Activated CD4-positive, alpha-beta memory T cell treated with anti-CD3 and anti-CD28 coated beads, Interleukin-2, amount 10 ng/mL, durations not matched to agents 7 days and 5 days (primary cell): ENCODE measurements at regions of chr13 and their contacts with region 1.

Region 1: DNA sequence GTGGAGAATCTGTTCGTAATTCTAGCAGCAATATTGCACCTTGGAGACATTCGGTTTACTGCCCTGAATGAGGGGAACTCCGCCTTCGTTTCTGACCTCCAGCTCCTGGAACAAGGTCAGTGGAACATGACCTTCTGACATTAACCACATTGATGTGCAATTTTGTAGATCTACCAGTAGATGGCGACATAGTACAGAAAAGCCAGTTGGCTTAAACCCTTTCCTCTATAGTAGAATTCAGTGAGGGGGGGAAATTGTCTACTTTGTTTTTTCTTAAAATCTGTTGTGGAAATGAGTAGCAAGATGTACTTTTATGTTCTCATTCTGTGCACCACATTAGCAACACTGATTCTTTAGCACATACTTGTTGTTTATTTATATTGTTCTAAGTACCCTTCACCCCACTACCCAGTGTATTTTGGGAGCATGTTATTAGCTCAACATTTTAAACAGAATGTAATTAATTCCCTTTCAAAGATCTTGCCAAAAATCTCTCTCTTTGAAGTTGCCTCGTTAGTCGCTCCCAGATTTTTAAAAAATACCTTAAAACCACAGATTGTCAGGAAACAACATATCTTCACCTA is 332.2 kb downstream of the MYO16 start:
- DNase-seq: peak; percentile 19
- H3K4me3 Mint-ChIP-seq: no peak overlapping the region
- H3K27ac Mint-ChIP-seq: no peak overlapping the region
- H3K4me1 Mint-ChIP-seq: peaks cover 2% of the 10 kb centered on the region
- H3K27me3 Mint-ChIP-seq: no peaks in the 10 kb centered on the region

Region 2: DNA sequence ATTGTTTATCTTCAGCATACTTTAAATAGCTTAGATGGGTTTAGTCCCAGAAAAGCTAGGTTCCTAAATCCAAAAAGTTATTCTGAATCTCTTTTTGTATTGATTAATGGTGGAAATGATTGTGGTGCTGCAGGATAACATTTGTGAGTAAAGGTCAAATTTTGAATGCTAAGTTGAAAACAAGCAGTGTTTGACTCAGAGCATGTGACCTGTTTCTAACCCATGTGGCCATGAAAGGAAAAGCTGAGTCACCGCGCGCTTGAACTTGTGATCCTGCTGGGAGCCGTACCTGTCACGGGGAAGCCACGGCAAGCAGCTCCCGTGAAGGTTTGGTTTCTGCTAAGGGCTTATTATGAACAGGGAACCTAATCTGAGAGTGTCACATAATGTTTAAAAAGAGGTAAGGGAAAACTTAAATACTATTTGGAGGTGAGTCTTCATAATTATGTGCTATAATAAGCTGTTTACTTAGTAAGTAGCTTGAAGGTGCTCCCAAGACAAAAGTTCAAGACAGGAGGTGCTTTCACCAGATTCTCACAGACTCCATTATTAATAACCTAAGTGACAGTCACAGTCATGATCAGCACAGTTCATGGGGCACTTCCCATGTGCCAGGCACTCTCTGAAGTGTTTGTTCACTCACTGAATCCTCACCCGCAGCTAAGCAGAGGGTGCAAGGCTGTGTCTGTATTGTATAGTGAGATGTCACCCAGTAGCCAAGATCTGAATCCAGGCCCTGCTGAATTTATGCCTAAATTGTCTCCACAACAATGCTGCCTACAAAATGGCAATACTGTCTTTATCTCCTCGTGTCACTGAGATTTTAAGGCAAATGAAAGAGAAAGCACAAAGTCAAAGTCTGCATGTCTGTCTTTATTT is 45.8 kb before region 1 on chr13:
- CTCF ChIA-PET with region 1: interaction called, 11 read pairs
- POLR2A ChIA-PET with region 1: interaction called, 4 read pairs
- DNase-seq: peak; percentile 90
- H3K4me3 Mint-ChIP-seq: peak overlapping the region; percentile 65
- H3K27ac Mint-ChIP-seq: peak overlapping the region; percentile 84
- H3K4me1 Mint-ChIP-seq: peaks cover 17% of the 10 kb centered on the region
- H3K27me3 Mint-ChIP-seq: no peaks in the 10 kb centered on the region